Activated CD4-positive, alpha-beta T cell treated with anti-CD3 and anti-CD28 coated beads for 36 hours (primary cell): ENCODE measurements at regions of chr21 and their contacts with region 1.

Region 1: GRCh38 chr21:34888569-34889319 is 160.4 kb downstream of the RUNX1 start:
- DNase-seq: peak; percentile 93
- ATAC-seq: peak; percentile 56
- H3K4me3 Mint-ChIP-seq: peak overlapping the region; percentile 92
- H3K27ac Mint-ChIP-seq: peak overlapping the region; percentile 100
- H3K4me1 Mint-ChIP-seq: peaks cover 37% of the 10 kb centered on the region
- H3K27me3 Mint-ChIP-seq: no peaks in the 10 kb centered on the region

Region 2: DNA sequence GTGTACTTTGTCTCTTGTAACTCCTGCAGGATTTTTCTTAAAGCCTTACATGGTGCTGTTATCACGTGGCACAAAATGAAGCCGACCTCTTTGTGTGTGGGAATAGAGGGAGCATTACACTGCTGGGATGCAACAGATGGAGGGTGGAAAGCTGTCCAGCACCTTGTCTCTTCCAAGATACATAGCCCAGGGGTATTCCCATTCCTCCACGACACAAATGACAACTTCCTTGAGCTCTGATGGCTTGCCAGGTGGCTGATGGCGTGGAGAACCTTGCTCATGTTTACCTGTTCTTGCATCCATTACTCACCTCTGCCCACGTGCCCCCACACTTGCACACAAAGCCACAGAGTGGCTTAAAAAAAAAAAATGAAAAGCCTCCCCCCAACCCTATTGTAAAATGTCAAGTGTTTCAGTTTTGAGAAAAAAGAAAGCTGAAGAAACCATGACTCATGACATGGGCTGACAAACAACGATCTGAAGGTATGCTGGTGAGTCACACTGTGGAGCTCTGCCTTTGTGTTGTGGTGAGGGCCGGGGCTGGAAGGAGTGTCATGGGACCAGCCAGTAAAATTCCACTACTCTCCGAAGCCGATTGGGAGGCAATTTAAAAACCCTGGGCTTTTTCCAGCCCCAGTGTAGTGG is 941.2 kb before region 1 on chr21:
- CTCF ChIA-PET with region 1: no interaction called
- POLR2A ChIA-PET with region 1: no interaction called
- intact Hi-C with region 1: loop called in 1 of 2 experiments (anchors 2 kb)
- DNase-seq: peak; percentile 92
- ATAC-seq: peak; percentile 63
- H3K4me3 Mint-ChIP-seq: peak overlapping the region; percentile 70
- H3K27ac Mint-ChIP-seq: peak overlapping the region; percentile 100
- H3K4me1 Mint-ChIP-seq: peaks cover 79% of the 10 kb centered on the region
- H3K27me3 Mint-ChIP-seq: no peaks in the 10 kb centered on the region

Region 3: GRCh38 chr21:34807146-34807880 is 81.4 kb before region 1 on chr21:
- CTCF ChIA-PET with region 1: interaction called, 4 read pairs
- POLR2A ChIA-PET with region 1: interaction called, 5 read pairs
- intact Hi-C with region 1: loop called (anchors 1 to 5 kb)
- DNase-seq: peak; percentile 83
- ATAC-seq: peak; percentile 92
- H3K4me3 Mint-ChIP-seq: no peak overlapping the region
- H3K27ac Mint-ChIP-seq: peak overlapping the region; percentile 87
- H3K4me1 Mint-ChIP-seq: peaks cover 90% of the 10 kb centered on the region
- H3K27me3 Mint-ChIP-seq: no peaks in the 10 kb centered on the region

Region 4: GRCh38 chr21:34986561-34987500 is 98.1 kb after region 1 on chr21:
- CTCF ChIA-PET with region 1: interaction called, 27 read pairs
- POLR2A ChIA-PET with region 1: interaction called, 33 read pairs
- intact Hi-C with region 1: loop called (anchors 1 kb)
- DNase-seq: peak; percentile 90
- ATAC-seq: peak; percentile 54
- H3K4me3 Mint-ChIP-seq: peak overlapping the region; percentile 61
- H3K27ac Mint-ChIP-seq: peak overlapping the region; percentile 89
- H3K4me1 Mint-ChIP-seq: peaks cover 97% of the 10 kb centered on the region
- H3K27me3 Mint-ChIP-seq: no peaks in the 10 kb centered on the region

Region 5: DNA sequence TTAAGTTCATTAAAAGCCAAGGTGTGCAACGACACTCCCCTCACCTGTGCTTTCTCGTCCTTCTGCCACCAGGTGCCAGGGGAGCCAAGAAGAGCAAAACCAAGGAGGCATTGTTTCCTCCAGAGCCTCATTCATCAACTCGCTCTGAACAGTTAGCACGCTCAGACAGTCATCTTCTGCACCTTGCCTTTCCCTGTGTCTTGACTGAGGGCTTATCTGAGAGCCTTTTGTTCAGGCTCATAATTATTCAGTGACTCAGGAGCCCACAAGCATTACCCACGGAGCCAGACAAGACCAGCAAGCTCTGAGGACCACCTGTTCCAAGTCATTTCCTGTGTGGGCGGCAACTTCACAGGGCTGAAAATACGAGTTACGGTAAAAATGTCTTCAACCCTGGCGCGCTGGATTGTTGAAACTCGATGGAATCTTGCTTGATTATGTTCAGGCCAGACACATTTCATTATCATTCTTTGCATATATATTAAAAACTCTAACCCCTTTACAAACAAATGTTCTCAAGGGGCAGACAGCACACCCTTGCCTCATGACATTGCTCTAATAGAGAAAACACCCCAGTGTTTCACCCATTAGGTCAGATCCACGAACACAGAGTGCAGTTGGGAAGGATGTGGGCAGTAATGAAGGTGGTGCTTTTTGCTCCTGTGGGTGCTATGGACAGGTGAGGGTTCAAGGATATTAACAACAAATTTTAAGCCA is 250.1 kb after region 1 on chr21:
- CTCF ChIA-PET with region 1: no interaction called
- POLR2A ChIA-PET with region 1: no interaction called
- intact Hi-C with region 1: loop called (anchors 1 to 5 kb)
- DNase-seq: peak; percentile 83
- ATAC-seq: peak; percentile 91
- H3K4me3 Mint-ChIP-seq: peak overlapping the region; percentile 65
- H3K27ac Mint-ChIP-seq: peak overlapping the region; percentile 93
- H3K4me1 Mint-ChIP-seq: peaks cover 38% of the 10 kb centered on the region
- H3K27me3 Mint-ChIP-seq: no peaks in the 10 kb centered on the region

Region 6: GRCh38 chr21:35414507-35415139 is 525.9 kb after region 1 on chr21:
- CTCF ChIA-PET with region 1: no interaction called
- POLR2A ChIA-PET with region 1: no interaction called
- intact Hi-C with region 1: loop called in 1 of 2 experiments (anchors 5 kb)
- DNase-seq: no peak
- ATAC-seq: no peak
- H3K4me3 Mint-ChIP-seq: no peak overlapping the region
- H3K27ac Mint-ChIP-seq: no peak overlapping the region
- H3K4me1 Mint-ChIP-seq: no peaks in the 10 kb centered on the region
- H3K27me3 Mint-ChIP-seq: peaks cover 11% of the 10 kb centered on the region